PC-9 (cell line): ENCODE measurements at regions of chr17 and their contacts with region 1.

Region 1: DNA sequence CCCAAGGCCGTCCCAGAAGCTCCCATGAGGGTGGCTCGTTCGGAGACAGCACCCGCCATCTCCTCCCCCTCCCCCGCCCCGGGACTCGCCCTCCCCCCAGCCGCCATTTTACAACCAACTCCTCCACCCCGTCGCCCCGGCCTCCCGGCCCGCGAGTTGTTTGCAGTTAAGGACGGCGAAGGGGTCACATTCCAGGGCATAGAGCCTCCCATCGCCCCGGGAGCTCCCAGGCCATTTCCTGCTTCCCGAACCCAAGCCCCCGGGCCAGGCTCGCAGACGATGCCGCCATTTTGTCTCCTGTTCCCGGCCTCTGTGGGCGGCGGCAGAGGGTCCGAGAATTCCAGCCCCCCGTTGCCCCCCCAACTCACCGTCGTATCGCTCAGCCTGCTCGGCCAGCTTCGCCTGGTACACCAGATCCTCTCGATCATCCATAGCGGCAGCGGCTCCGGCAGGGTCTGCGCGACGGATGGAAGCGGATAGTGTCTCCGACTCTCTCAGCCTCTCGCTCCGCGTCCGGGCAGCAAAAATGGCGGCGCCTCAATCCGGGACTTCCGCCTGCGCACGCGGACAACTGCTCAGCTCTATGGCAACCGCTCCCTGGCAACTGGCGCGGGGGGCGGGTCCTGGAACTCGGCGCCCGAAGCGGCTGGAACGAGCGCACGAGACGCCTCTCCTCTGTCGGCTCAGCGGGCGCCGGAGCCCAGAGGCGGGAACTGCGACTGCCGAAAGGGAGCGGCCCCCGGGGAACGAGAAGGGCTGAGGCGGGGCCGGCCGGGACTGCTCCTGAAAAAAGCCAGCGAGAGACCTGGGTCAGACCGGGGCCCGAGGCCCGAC is at the start of gene YWHAE:
- DNase-seq: peak; percentile 91 to 99
- H3K4me3 ChIP-seq: peak within 1 kb of the TSS; percentile 96
- H3K27ac ChIP-seq: peak within 1 kb of the TSS; percentile 96
- H3K4me1 ChIP-seq: peaks cover 35% of the 10 kb centered on the region
- H3K27me3 ChIP-seq: no peaks in the 10 kb centered on the region
- CTCF ChIP-seq: no peak
- total RNA-seq, gene YWHAE: 841 and 1,140 TPM in 2 replicates

Region 2: DNA sequence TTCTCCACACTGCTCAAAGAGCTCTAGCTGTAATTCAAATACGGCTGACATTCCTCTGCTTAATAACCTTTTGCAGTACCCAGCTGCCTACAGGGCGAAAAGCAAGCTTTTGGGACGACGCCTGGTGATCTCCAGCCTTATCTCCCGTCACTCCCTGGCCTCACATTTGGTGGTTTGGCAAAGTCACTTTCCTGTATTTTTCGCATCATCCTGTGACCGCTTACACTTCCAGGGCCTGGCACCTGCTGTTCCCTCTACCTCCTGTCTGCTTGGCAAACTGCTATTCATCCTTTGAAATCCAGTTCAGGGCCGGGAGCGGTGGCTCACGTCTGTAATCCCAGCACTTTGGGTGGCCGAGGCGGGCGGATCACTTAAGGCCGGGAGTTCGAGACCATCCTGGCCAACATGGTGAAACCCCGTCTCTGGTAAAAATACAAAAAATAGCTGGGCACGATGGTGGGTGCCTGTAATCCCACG is 132.4 kb before region 1 on chr17:
- CTCF ChIA-PET with region 1: no interaction called
- POLR2A ChIA-PET with region 1: no interaction called
- intact Hi-C with region 1: loop called (anchors 1 kb)
- DNase-seq: peak in 1 of 2 experiments; percentile 20
- H3K4me3 ChIP-seq: peak overlapping the region; percentile 87
- H3K27ac ChIP-seq: no peak overlapping the region
- H3K4me1 ChIP-seq: peaks cover 12% of the 10 kb centered on the region; the same call in 1 of the 2 replicates
- H3K27me3 ChIP-seq: no peaks in the 10 kb centered on the region
- CTCF ChIP-seq: no peak

Region 3: DNA sequence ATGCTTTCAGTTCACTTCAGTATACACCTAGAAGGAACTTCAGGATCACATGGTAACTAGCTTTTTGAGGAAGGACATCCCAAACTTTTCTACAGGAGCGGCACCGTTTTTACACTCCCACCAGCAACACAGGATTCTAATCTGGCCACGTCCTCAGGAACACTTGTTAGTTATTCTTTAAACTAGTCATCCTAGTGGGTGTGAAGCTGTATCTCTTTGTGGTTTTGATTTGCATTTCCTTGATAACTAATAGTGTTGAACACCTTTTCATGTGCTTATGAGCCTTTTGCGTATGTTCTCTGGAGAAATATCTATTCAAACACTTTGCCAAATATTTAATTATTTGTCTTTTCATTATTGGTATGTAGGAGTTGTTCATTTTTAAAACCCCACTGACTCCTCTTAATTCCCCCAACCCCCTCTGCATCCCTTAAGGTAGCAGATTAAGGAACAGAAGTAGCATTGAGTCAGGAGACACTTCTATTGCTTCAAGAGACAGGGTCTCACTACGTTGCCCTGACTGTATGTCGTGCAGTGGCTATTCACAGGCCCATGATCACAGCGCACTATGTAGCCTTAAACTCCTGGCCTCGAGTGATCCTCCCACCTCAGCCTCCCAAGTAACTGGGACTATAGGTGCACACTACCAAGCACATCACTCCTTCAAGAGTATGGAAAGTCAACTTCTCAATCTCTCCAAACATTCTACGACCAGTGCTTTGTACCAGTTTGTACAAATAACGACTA is 25.3 kb before region 1 on chr17:
- CTCF ChIA-PET with region 1: no interaction called
- POLR2A ChIA-PET with region 1: no interaction called
- intact Hi-C with region 1: no loop called
- DNase-seq: no peak
- H3K4me3 ChIP-seq: no peak overlapping the region
- H3K27ac ChIP-seq: no peak overlapping the region
- H3K4me1 ChIP-seq: no peaks in the 10 kb centered on the region
- H3K27me3 ChIP-seq: no peaks in the 10 kb centered on the region
- CTCF ChIP-seq: no peak

Region 4: GRCh38 chr17:1422907-1423306 is 23.0 kb after region 1 on chr17:
- CTCF ChIA-PET with region 1: no interaction called
- POLR2A ChIA-PET with region 1: interaction called, 5 read pairs
- intact Hi-C with region 1: loop called (anchors 2 kb)
- DNase-seq: peak; percentile 64 to 72
- H3K4me3 ChIP-seq: no peak overlapping the region
- H3K27ac ChIP-seq: peak overlapping the region; percentile 58
- H3K4me1 ChIP-seq: peaks cover 10% of the 10 kb centered on the region
- H3K27me3 ChIP-seq: no peaks in the 10 kb centered on the region
- CTCF ChIP-seq: no peak

Region 5: DNA sequence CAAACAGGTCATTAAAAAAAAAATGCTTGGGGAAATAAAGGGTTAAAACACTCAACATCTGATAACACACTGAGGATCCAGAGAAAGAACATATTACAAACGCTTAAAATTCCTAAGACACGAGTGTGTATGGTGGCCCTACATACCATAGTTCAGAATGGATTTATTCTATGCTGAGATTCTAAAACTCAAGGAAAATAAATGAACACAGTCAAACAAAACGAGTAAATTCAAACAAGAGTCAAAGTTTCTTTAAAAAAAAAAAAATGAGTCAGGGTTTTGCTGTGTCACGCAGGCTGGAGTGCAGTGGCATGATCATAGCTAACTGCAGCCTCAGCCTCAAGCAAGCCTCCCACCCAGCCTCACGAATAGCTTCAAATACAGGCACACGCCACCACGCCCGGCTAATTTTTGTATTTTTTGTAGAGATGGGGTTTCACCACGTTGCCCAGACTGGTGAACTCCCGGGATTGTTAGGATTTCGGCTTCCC is 38.7 kb after region 1 on chr17:
- CTCF ChIA-PET with region 1: no interaction called
- POLR2A ChIA-PET with region 1: interaction called, 11 read pairs
- intact Hi-C with region 1: no loop called
- DNase-seq: peak in 1 of 2 experiments; percentile 28
- H3K4me3 ChIP-seq: no peak overlapping the region
- H3K27ac ChIP-seq: peak overlapping the region; percentile 21
- H3K4me1 ChIP-seq: no peaks in the 10 kb centered on the region
- H3K27me3 ChIP-seq: no peaks in the 10 kb centered on the region
- CTCF ChIP-seq: no peak

Region 6: GRCh38 chr17:1455797-1456599 is 56.1 kb after region 1 on chr17 and contains the start of gene CRK:
- CTCF ChIA-PET with region 1: no interaction called
- POLR2A ChIA-PET with region 1: interaction called, 3 read pairs
- intact Hi-C with region 1: loop called (anchors 10 kb)
- DNase-seq: peak; percentile 84 to 99
- H3K4me3 ChIP-seq: peak within 1 kb of the TSS; percentile 98
- H3K27ac ChIP-seq: peak within 1 kb of the TSS; percentile 59
- H3K4me1 ChIP-seq: peaks cover 27% of the 10 kb centered on the region
- H3K27me3 ChIP-seq: no peaks in the 10 kb centered on the region
- CTCF ChIP-seq: no peak
- total RNA-seq, gene CRK: 57.1 and 57.9 TPM in 2 replicates

Region 7: DNA sequence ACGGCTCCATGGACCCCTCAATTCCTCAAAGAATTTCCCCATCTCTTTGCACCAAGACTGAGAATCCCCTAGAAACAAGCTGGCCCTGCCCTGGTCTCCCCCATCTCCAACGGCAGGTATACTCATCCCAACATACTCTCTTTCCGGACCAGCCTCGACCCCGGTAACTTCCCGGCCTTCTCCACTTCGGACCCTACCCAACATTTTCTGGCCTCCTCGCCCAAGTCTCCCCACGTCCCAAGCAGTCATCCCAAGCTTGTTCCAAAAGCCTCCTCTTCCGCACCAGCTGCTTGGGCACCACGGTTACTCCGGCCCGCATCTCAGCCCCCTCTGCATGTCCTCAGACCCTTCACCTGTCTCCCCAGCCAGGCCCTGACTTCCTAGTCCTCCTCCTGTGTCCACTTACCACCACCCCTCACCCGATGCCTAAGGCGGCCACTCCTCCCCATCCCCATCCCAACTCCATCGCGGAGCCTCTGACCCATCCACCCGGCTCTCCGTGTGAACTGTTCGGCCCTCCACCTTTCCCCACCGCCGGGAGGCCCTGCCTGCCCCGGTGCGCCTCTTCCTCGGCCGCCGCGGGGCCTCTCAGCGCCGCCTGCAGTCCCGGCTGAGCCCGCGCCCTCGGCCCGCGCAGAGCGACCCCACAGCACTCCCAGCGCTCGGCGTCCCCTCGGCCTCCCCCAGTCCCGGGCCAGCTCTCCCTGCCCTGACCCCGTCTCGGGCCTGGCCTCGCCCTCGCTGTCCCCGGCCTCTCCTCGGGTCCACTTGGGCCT is 161.7 kb after region 1 on chr17:
- CTCF ChIA-PET with region 1: no interaction called
- POLR2A ChIA-PET with region 1: no interaction called
- intact Hi-C with region 1: no loop called
- DNase-seq: peak in 1 of 2 experiments; percentile 36
- H3K4me3 ChIP-seq: peak overlapping the region; percentile 92
- H3K27ac ChIP-seq: no peak overlapping the region
- H3K4me1 ChIP-seq: peaks cover 21% of the 10 kb centered on the region
- H3K27me3 ChIP-seq: no peaks in the 10 kb centered on the region
- CTCF ChIP-seq: no peak; the same call in 1 of the 2 replicates